Endothelial cell of umbilical vein (primary cell): ENCODE measurements at regions of chr2 and their contacts with region 1.

Region 1: DNA sequence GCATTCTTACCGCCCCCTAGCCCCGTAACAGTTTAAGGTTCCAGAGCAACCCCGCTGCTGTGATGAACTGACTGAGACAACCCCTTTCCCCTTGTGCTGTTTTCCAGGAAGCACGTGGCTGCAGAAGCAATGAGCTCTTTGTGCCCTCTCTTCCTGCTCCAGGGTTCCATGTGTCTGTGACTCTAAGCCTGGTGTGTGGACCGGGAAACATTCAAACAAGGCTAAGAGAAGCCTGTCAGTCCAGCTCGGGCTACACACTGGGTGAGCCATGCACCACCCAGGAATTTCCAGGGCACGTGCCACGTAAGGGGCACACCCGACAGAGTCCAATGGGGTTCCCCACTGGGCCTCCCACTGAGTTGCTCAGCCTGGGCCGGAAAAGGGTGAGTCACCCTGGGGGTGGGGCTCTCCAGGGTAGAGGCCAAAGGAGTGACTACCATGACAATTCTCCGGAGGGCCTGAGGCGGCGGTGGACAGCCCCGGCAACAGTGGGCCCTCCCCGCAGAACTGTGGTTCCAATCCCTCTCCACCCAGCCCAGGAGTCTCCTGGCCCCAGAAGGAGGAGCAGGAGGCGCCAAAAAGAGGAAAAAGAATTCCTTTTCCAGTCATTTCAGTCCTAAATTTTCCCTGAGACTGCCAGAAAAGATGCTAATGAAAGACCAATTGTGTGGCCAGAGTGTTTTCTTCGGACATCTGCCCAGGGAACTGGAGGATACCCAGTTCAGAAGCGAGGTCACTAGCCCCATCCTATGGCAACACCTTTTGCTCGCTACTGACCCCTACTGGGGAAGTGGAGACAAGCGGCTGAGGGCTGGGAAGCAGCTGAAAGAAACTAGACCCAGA is 157.8 kb upstream of the SLC1A4 start:
- DNase-seq: peak; percentile 91
- H3K4me3 ChIP-seq: no peak overlapping the region
- H3K27ac ChIP-seq: peak overlapping the region; percentile 86
- H3K4me1 ChIP-seq: peaks cover 20% of the 10 kb centered on the region
- H3K27me3 ChIP-seq: no peaks in the 10 kb centered on the region
- CTCF ChIP-seq: peak; percentile 88 to 93
- POLR2A ChIP-seq: peak; percentile 19

Region 2: DNA sequence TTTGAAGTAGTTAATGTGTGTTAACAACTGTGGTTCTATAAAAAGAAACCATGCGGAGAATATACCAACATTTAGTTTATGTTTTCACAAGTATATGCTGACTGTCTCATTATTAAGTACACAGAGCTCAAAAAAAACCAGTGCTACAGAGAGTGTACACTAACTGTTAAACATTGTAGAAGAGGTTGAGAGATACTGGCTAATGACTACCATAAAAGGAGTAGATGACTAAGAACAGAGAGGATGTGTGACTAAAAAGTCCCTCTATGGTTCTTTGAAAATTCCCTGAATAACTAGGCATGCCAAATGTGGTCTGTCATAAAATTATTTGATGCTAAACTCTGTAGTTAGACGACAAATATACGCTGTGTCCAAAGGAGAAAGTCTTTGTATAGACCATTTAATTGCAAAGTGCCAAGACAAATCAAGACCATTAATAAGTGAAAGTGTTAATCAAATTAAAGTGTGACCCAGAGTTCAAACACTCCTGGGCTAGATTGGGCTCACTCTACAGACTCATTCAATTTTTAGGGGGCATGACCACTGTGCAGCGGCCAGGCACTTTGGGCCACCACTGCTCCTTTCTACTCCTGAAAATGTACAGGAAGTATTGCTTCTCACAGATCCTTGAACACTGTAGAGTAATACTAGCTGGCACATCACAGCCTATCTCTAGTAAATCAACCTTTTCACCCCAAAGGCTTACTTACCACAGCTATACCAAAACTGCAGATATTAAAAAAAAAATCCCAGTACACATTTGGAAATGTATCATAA is 132.5 kb before region 1 on chr2:
- CTCF ChIA-PET with region 1: interaction called, 4 read pairs
- POLR2A ChIA-PET with region 1: no interaction called
- dilution Hi-C with region 1: no loop called
- intact Hi-C with region 1: loop called (anchors 2 kb)
- DNase-seq: peak; percentile 82
- H3K4me3 ChIP-seq: no peak overlapping the region
- H3K27ac ChIP-seq: peak overlapping the region; percentile 79
- H3K4me1 ChIP-seq: peaks cover 28% of the 10 kb centered on the region
- H3K27me3 ChIP-seq: no peaks in the 10 kb centered on the region
- CTCF ChIP-seq: no peak
- POLR2A ChIP-seq: no peak

Region 3: DNA sequence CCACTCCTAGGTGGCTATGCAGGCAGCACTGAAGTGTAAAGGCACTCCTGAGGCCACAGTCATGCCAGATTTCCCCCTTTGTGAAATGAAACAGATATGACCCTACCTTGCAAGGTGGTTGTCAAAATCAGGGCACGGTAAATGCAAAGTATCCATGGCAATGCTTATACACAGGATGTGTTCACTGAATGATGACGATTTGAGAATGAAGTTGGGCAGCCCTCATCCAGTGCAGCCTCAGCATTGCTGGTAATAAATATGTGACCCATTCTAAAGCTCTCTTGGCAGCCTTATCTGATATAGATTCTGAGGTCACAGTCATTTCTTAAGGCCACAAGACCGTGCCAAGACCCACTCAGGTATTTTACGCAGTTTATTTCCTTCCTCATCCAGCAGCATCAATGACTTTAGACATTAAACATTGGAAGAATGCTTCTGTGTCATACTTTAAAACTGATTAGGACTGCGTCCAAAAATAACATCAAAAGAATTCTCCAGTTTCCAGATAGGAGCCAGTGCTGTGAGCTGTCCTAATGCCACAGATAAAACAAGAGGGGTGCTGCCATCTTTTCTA is 52.2 kb before region 1 on chr2:
- CTCF ChIA-PET with region 1: interaction called, 15 read pairs
- POLR2A ChIA-PET with region 1: no interaction called
- dilution Hi-C with region 1: no loop called
- intact Hi-C with region 1: loop called (anchors 1 kb)
- DNase-seq: peak; percentile 88
- H3K4me3 ChIP-seq: no peak overlapping the region
- H3K27ac ChIP-seq: peak overlapping the region; percentile 85
- H3K4me1 ChIP-seq: peaks cover 29% of the 10 kb centered on the region
- H3K27me3 ChIP-seq: no peaks in the 10 kb centered on the region
- CTCF ChIP-seq: no peak
- POLR2A ChIP-seq: no peak

Region 4: DNA sequence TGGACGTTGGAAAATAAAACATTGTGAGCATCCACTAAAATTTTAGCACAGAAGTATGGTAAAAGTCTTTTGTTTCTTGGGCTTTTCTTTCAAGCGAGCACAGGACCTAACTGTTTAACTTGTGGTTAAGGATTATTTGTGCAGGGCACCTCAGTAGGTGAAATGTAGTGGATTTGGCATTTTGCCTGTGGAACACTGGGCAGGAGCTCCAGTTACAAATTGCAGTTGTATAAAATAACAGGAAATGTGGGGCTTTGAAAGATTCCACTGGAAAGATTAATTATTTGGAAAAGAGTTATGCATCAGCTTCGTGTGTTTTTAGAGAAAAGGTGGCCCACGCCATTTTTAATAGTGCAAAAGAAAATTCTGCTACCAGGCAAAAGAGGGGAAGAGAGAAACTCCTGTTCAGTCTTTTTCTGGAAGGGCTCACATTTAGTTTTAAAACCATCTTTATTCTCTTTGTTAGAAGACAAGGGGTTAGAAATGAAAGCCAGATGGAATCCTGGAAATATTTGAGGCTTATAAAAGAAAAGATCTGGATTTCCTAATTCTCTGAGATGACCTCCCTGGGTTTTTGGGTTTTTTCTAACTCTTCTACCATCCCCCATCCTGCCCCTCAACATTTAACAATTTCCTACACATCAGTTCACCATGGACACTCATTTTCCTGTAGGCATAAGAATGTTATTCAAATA is 33.3 kb before region 1 on chr2:
- CTCF ChIA-PET with region 1: interaction called, 61 read pairs
- POLR2A ChIA-PET with region 1: interaction called, 6 read pairs
- dilution Hi-C with region 1: no loop called
- intact Hi-C with region 1: loop called (anchors 1 kb)
- DNase-seq: peak; percentile 77
- H3K4me3 ChIP-seq: no peak overlapping the region
- H3K27ac ChIP-seq: peak overlapping the region; percentile 30
- H3K4me1 ChIP-seq: peaks cover 65% of the 10 kb centered on the region
- H3K27me3 ChIP-seq: no peaks in the 10 kb centered on the region
- CTCF ChIP-seq: no peak
- POLR2A ChIP-seq: no peak

Region 5: DNA sequence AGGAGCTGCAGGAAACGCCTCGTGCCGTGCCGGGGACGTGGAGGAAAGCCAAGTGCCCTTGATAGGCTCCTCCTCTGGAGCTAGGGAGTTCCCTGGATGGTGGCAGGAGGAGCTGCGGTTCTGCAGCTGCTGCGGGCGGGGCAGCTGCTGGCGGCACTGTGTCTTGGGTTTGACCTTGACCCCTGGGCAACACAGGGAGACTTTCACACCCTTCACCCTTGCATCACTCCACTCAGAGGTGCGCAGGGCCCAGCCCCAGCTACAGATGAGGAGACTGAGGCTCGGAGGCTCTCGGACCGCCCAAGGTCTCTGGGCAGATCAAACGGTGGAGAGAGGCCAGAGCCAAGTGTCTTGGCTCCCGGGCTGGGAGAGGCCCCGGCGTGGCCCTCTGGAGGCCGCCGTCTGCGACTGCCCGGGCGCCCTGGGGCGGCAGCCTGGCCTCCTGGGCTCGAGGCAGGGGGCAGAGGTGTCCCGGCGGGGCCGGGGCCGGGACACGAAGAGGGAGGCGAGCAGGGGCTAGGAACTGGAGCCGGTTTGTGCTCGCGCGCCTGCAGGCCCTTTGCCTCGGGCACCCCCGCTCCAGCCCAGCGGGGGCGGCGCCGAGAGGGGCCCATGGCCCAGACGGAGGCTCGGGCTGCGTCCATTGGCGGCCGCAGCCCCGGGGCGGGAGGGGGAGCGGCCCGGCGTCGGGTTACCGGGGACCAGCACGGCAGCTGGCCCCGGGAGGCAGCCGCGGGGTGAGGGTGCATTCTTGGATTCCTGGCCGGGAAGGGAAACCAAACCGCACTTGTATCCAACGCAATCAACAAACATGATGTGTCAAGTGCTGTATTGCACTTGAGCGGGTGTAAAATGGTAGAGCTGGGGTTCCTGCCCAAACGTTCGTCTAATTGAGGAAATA is 28.2 kb after region 1 on chr2:
- CTCF ChIA-PET with region 1: interaction called, 24 read pairs
- POLR2A ChIA-PET with region 1: no interaction called
- dilution Hi-C with region 1: no loop called
- intact Hi-C with region 1: loop called (anchors 1 kb)
- DNase-seq: peak; percentile 76
- H3K4me3 ChIP-seq: peak overlapping the region in 2 of 3 experiments; percentile 24 to 34
- H3K27ac ChIP-seq: peak overlapping the region; percentile 66
- H3K4me1 ChIP-seq: peaks cover 17% of the 10 kb centered on the region
- H3K27me3 ChIP-seq: no peaks in the 10 kb centered on the region
- CTCF ChIP-seq: peak in 1 of 2 donors; percentile 22
- POLR2A ChIP-seq: no peak

Region 6: GRCh38 chr2:64888591-64889309 is 57.4 kb after region 1 on chr2:
- CTCF ChIA-PET with region 1: no interaction called
- POLR2A ChIA-PET with region 1: no interaction called
- dilution Hi-C with region 1: no loop called
- intact Hi-C with region 1: no loop called
- DNase-seq: peak; percentile 25
- H3K4me3 ChIP-seq: no peak overlapping the region
- H3K27ac ChIP-seq: no peak overlapping the region
- H3K4me1 ChIP-seq: no peaks in the 10 kb centered on the region
- H3K27me3 ChIP-seq: peaks cover 0 to 2% of the 10 kb centered on the region in 2 experiments
- CTCF ChIP-seq: peak in 1 of 2 donors; percentile 17
- POLR2A ChIP-seq: no peak